CD8-positive, alpha-beta T cell (primary cell): ENCODE measurements at regions of chr13 and their contacts with region 1.

Region 1: DNA sequence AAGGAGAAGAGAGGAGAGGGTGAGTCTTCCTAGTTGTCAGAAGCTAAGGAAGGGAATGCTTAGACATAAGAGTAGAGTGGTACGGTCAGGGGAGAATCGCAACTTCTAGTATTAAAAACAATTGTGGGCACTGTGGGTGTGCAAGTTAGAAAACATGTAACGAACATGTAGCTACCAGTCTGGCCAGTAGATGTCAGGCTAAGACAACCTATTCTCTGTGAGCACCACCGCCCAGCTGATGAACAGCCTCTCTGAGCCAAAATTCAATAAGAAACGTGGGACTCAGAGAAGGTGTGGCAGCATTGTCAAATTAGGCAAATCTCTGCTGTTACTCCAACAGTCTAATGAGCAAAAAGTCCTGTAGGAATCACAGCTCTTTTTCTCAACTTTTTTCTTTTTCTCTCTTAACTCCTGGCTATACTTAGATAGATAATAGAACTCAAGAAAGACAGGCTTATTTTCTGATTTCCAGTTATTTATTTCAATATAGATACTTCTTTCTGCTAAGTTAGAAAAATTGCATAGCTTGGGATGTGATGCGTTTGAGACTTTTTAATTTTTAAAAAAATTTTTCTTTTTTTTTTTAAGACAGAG is 186.2 kb downstream of the USP12 start:
- DNase-seq: peak; percentile 43 to 85 (median 69)
- ATAC-seq: peak; percentile 96
- H3K4me3 ChIP-seq: no peak overlapping the region
- H3K4me3 Mint-ChIP-seq: no peak overlapping the region
- H3K27ac ChIP-seq: no peak overlapping the region
- H3K27ac Mint-ChIP-seq: no peak overlapping the region
- H3K4me1 ChIP-seq: no peaks in the 10 kb centered on the region
- H3K4me1 Mint-ChIP-seq: peaks cover 3% of the 10 kb centered on the region
- H3K27me3 ChIP-seq: no peaks in the 10 kb centered on the region
- H3K27me3 Mint-ChIP-seq: peaks cover 16% of the 10 kb centered on the region
- CTCF ChIP-seq: peak; percentile 87

Region 2: DNA sequence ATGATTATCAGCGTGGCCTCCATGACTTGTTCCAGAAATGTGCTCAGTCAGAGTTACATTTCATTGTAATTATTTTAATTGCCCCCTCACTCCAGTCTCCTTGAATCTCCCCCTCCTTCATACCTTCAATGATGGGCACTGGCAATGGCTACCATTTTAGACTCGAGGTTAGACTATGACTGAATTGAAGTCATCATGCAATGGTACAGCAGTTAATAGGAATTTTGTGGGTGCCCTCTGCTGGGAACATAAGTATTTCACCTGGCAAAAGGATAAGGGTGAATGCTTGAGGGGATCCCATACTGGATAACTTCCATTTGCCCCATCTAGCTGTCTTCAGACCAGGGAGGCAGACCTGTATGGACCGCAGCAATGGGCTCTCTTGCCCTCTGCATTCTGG is 218.5 kb after region 1 on chr13:
- CTCF ChIA-PET with region 1: interaction called, 10 read pairs
- POLR2A ChIA-PET with region 1: no interaction called
- intact Hi-C with region 1: loop called (anchors 1 to 10 kb)
- DNase-seq: peak in 2 of 9 experiments; percentile 13 to 27
- ATAC-seq: no peak
- H3K4me3 ChIP-seq: no peak overlapping the region
- H3K4me3 Mint-ChIP-seq: no peak overlapping the region
- H3K27ac ChIP-seq: no peak overlapping the region
- H3K27ac Mint-ChIP-seq: no peak overlapping the region
- H3K4me1 ChIP-seq: no peaks in the 10 kb centered on the region
- H3K4me1 Mint-ChIP-seq: no peaks in the 10 kb centered on the region
- H3K27me3 ChIP-seq: no peaks in the 10 kb centered on the region
- H3K27me3 Mint-ChIP-seq: no peaks in the 10 kb centered on the region
- CTCF ChIP-seq: no peak

Region 3: DNA sequence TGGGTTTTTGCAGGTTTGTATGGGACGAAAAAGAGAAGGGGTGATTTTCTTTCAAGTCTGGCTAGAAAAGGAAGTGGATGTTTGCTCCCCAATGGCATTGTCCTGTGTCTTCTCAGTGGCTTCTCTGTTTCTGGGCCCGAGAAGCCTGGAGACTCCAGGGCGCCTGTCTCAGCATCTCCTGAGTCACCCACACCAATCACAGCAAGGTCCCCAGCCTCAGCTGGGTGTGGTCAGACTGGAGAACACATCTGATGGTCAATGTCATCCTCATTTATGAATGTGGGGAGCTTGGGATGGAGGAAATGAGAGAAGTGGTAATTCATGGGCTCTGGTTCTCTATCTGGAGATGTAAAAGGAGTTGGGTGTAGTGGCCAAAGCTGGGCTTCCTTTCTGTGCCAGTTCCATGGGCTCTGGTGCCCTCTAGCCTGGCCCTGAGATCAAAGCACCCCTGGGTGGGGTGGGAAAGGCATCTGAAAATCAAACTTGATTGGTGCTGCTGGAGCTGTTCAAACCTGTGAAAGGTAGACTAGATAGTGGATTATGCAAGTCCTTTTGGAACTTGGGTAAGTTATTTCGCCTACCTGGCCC is 298.6 kb after region 1 on chr13:
- CTCF ChIA-PET with region 1: interaction called, 4 read pairs
- POLR2A ChIA-PET with region 1: no interaction called
- intact Hi-C with region 1: loop called in 1 of 2 experiments (anchors 1 kb)
- DNase-seq: peak in 2 of 9 experiments; percentile 23 to 36
- ATAC-seq: no peak
- H3K4me3 ChIP-seq: no peak overlapping the region
- H3K4me3 Mint-ChIP-seq: no peak overlapping the region
- H3K27ac ChIP-seq: no peak overlapping the region
- H3K27ac Mint-ChIP-seq: no peak overlapping the region
- H3K4me1 ChIP-seq: no peaks in the 10 kb centered on the region
- H3K4me1 Mint-ChIP-seq: peaks cover 6% of the 10 kb centered on the region
- H3K27me3 ChIP-seq: no peaks in the 10 kb centered on the region
- H3K27me3 Mint-ChIP-seq: no peaks in the 10 kb centered on the region
- CTCF ChIP-seq: no peak

Region 4: DNA sequence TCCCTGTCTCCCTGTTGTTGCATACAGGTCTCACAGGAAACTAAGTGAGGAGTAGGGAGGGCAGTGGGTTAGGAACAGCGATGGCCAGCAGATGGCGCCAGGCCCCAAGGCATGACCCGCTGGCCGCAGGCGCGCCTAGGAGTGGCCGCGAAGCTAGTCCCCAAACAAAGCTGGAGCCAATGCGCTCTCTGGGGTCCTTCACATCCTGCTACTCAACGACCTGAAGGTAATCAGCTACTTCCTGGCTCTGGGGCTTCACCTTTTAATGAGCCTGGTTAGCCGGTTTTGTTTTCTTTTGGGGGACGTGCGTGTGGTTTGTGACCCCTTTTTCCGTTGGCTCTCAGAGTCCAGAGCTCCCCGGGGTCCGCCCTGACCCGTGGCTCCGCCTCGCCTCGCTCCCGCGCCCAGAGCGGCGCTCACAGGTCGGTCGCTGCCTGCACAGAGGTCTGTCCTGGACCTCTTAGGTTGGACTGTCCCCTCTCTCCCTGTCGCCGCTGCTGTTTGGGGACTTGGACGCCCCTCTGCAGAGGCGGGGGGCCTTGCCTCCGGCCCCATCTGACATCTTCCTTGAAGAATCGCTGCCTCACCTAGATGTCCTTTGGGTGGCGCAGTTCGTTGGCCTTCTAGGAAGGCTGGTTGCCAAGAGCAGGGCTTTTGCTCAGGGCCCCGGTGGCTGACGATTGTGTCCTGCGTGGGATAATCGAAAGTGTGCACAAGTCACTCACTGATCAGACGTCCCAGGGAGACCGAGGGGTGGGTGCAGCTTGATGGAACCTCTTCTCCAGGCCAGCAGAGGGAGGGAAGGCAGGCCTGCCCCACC is 376.9 kb after region 1 on chr13:
- CTCF ChIA-PET with region 1: interaction called, 251 read pairs
- POLR2A ChIA-PET with region 1: interaction called, 8 read pairs
- intact Hi-C with region 1: loop called in 1 of 2 experiments (anchors 1 kb)
- DNase-seq: peak; percentile 56 to 86 (median 78)
- ATAC-seq: peak; percentile 90
- H3K4me3 ChIP-seq: peak overlapping the region; percentile 17 to 39
- H3K4me3 Mint-ChIP-seq: peak overlapping the region; percentile 67
- H3K27ac ChIP-seq: no peak overlapping the region
- H3K27ac Mint-ChIP-seq: no peak overlapping the region
- H3K4me1 ChIP-seq: peaks cover 5% of the 10 kb centered on the region
- H3K4me1 Mint-ChIP-seq: peaks cover 5% of the 10 kb centered on the region
- H3K27me3 ChIP-seq: peaks cover 0 to 10% of the 10 kb centered on the region in 2 experiments
- H3K27me3 Mint-ChIP-seq: peaks cover 17% of the 10 kb centered on the region
- CTCF ChIP-seq: peak; percentile 73

Region 5: GRCh38 chr13:27988520-27988919 is 1003.1 kb after region 1 on chr13 and contains the start of gene URAD:
- CTCF ChIA-PET with region 1: interaction called, 23 read pairs
- POLR2A ChIA-PET with region 1: no interaction called
- intact Hi-C with region 1: loop called (anchors 2 kb)
- DNase-seq: no peak
- ATAC-seq: no peak
- H3K4me3 ChIP-seq: no peak within 1 kb of the TSS
- H3K4me3 Mint-ChIP-seq: no peak within 1 kb of the TSS
- H3K27ac ChIP-seq: no peak within 1 kb of the TSS
- H3K27ac Mint-ChIP-seq: no peak within 1 kb of the TSS
- H3K4me1 ChIP-seq: no peaks in the 10 kb centered on the region
- H3K4me1 Mint-ChIP-seq: no peaks in the 10 kb centered on the region
- H3K27me3 ChIP-seq: no peaks in the 10 kb centered on the region
- H3K27me3 Mint-ChIP-seq: peaks cover 22% of the 10 kb centered on the region
- CTCF ChIP-seq: no peak
- total RNA-seq, gene URAD: not detected